ENCODE measurements at regions of chr15 and their contacts with region 1.

Region 1: GRCh38 chr15:35751413-35752133 is 205.6 kb upstream of the DPH6 start:
- DNase-seq: peak; percentile 28 to 92 (median 76)

Region 2: GRCh38 chr15:35646790-35647189 is 104.8 kb before region 1 on chr15:
- intact Hi-C with region 1: no loop called
- DNase-seq: no peak

Region 3: GRCh38 chr15:35912196-35912595 is 160.6 kb after region 1 on chr15:
- intact Hi-C with region 1: loop called (anchors 10 kb)
- DNase-seq: no peak

Region 4: DNA sequence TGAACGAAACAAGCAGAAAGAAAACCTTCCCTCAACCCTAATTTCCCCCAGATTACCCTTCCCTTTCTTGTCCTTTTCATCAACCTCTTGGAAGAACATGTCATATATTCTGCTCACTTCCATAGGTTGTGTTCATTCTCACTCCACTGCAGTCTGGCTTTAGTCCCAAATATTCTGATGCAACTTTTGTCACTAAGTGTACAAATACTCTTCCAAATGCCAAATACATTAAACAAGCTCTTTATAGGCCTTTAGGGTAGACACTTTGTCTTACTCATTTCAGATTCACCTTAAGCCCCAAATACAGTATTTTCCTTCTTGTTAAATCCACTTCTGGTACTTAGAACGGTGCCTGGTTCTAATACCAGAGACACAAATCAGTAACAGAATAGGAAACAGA is 421.4 kb after region 1 on chr15:
- intact Hi-C with region 1: no loop called
- DNase-seq: no peak

Measured in posterior cingulate gyrus (tissue), 11 donors.